ENCODE measurements at regions of chr1 and their contacts with region 1.

Region 1: DNA sequence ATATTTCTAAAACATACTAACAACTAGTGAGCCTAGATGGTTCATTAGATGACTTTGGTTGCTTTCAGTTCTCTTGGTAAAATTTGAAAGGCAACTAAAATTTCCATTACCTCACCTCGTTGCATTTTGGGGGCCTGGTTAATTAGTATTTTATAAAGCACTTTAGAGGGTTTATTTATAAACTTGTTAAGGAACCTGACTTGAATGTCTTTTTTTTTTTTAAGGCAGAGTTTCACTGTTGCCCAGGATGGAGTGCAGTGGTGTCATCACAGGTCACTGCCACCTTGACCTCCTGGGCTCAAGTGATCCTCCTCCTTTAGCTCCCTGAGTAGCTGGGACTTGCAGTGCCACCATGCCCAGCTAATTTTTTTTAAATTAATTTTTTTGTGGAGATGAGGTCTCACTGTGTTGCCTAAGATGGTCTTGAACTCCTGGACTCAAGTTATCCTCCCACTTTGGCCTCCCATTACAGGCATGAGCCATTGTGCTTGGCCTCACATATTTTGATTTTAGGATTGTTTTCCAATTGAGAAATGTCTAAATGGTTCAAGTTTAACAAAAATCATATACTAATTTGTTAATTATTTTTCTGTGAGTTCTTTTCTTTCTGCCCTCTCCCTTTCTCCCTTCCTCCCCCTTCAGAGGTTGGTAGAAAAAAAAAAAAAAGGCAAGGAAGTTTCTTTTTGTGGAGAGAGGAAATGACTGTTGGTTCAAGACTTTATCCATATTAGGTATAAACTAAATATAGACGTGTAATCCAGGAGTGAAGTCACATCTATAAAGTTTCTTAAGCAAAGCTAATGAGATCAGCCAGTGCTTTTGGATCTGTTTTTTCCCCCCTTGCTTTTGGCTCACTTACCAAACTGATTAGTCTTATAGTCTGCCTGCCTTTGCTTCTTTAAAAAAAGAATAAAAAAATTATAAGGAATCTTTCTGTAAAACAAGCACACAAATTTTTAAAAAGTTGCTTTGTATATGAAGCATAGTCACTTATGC is 24.7 kb downstream of the CLIC4 start:
- DNase-seq: no peak
- ATAC-seq: peak; percentile 78
- H3K4me3 ChIP-seq: no peak overlapping the region
- H3K27ac ChIP-seq: peak overlapping the region; percentile 54
- H3K4me1 ChIP-seq: peaks cover 7% of the 10 kb centered on the region; the same call in 1 of the 2 replicates
- H3K27me3 ChIP-seq: no peaks in the 10 kb centered on the region
- CTCF ChIP-seq: no peak
- EP300 ChIP-seq: peak; percentile 49 to 57; a peak in 3 of 4 replicates
- POLR2A ChIP-seq: no peak
- RAD21 ChIP-seq: no peak

Region 2: DNA sequence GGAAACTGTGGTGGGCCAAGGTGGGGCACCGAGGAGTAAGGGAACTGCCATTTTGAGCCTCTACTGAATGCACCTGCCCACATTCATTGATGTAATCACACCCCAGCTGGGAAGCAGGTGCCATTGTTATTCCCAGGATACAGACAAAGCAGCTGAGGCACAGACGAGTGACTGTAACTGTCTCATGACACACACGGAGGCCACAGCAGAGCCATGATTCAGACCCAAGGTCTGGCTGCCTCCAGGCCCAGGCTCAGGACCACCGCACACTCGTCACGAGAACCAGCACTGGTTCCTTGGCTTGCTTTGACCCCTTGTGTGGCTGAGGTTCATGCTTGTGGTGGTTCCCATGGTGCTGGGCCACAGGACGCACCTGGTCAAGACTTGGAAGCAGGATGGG is 70.3 kb before region 1 on chr1:
- CTCF ChIA-PET with region 1: no interaction called
- POLR2A ChIA-PET with region 1: interaction called, 10 read pairs
- RAD21 ChIA-PET with region 1: no interaction called
- SMC1A ChIA-PET with region 1: interaction called, 6 read pairs
- in situ Hi-C with region 1: no loop called
- intact Hi-C with region 1: no loop called
- DNase-seq: no peak
- ATAC-seq: no peak
- H3K4me3 ChIP-seq: no peak overlapping the region
- H3K27ac ChIP-seq: no peak overlapping the region
- H3K4me1 ChIP-seq: peaks cover 17% of the 10 kb centered on the region
- H3K27me3 ChIP-seq: no peaks in the 10 kb centered on the region
- CTCF ChIP-seq: no peak
- EP300 ChIP-seq: no peak
- POLR2A ChIP-seq: no peak
- RAD21 ChIP-seq: no peak

Region 3: DNA sequence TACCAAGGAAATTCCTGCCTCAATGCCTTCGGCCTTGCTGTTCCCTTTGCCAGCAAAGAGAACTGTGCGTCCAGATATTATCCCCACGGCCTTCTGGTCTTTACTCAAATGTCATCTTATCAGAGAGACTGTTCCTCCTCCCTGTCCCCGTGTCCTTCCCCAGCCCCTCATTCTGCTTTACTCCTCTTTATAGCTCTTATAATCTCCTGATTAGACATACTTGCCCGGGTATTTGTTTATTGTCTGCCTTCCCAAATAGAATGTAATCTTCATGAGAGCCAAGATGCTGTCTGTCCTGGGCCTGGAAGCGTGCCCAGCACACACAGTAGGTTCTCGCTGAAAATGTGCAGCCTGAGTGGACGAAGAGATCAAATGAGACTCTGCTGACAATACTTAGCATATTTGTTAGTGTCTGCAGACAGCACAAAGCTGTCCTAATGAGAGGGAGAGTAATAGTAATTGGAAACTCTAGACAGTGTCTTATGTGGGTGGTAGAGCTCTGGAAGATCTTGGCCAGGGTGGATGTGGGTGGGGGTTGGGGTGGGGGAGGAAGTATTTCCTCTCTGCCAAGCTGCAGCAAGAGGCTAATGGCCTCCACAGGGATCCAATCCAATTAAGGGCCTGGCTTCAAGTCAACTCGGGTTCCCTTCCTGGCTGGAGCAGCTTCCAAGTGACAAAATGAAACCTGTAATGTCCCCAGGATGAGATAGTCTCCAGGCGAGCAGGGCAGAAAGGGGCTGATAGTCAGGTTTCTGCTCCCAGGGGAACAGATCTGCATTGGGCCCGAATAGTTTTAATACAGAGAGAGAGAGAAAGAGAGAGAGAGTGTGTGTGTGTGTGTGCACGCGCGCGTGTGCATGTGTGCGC is 34.2 kb before region 1 on chr1:
- CTCF ChIA-PET with region 1: interaction called, 4 read pairs
- POLR2A ChIA-PET with region 1: interaction called, 5 read pairs
- RAD21 ChIA-PET with region 1: interaction called, 3 read pairs
- SMC1A ChIA-PET with region 1: interaction called, 12 read pairs
- in situ Hi-C with region 1: no loop called
- intact Hi-C with region 1: no loop called
- DNase-seq: no peak
- ATAC-seq: no peak
- H3K4me3 ChIP-seq: no peak overlapping the region
- H3K27ac ChIP-seq: peak overlapping the region; percentile 33; the same call in 1 of the 2 replicates
- H3K4me1 ChIP-seq: peaks cover 38% of the 10 kb centered on the region
- H3K27me3 ChIP-seq: no peaks in the 10 kb centered on the region
- CTCF ChIP-seq: no peak
- EP300 ChIP-seq: no peak
- POLR2A ChIP-seq: no peak
- RAD21 ChIP-seq: no peak

Region 4: DNA sequence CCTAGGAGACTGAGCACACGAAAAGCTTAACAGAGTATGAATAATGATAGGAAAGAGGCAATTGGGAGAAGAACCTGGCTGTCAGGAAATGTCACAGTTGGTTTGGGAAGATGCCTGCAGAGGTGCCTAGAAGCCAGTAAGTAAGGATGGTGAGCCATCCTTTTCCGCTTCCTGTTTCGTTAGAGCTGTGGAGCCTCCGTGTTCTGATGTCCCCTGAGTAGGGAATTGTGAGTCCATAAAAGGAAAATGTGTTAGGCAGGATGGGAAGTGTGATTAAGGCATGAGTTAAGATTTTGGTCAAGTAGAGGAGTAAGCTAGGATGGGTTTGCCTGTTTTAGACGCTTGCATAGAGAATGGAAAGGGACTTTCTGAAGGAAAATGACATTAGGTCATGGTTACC is 15.7 kb before region 1 on chr1:
- CTCF ChIA-PET with region 1: interaction called, 9 read pairs
- POLR2A ChIA-PET with region 1: interaction called, 14 read pairs
- RAD21 ChIA-PET with region 1: interaction called, 26 read pairs
- SMC1A ChIA-PET with region 1: interaction called, 174 read pairs
- in situ Hi-C with region 1: no loop called
- intact Hi-C with region 1: no loop called
- DNase-seq: no peak
- ATAC-seq: no peak
- H3K4me3 ChIP-seq: no peak overlapping the region
- H3K27ac ChIP-seq: no peak overlapping the region
- H3K4me1 ChIP-seq: peaks cover 7% of the 10 kb centered on the region; the same call in 1 of the 2 replicates
- H3K27me3 ChIP-seq: no peaks in the 10 kb centered on the region
- CTCF ChIP-seq: no peak
- EP300 ChIP-seq: no peak
- POLR2A ChIP-seq: no peak
- RAD21 ChIP-seq: no peak

Region 5: DNA sequence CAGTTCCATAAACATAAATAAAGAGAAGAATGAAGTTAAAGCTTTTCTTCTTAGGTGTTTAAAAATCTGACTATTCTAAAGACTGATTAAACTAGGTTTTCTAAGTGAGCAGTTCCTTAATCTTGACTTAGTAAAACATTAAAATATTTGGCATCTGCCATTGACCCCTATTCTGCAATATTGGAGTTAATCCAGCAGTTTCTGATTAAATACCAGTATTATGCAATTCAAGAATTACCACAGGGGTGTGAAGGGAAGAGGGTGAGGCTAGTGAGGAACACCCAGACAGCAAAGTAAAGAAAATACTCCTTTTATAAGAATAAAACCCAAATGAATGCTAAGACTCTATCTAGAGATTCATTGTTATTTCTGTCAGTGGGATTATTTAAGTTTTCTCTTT is 16.2 kb after region 1 on chr1:
- CTCF ChIA-PET with region 1: interaction called, 5 read pairs
- POLR2A ChIA-PET with region 1: interaction called, 10 read pairs
- RAD21 ChIA-PET with region 1: interaction called, 3 read pairs
- SMC1A ChIA-PET with region 1: interaction called, 5 read pairs
- in situ Hi-C with region 1: no loop called
- intact Hi-C with region 1: no loop called
- DNase-seq: no peak
- ATAC-seq: no peak
- H3K4me3 ChIP-seq: no peak overlapping the region
- H3K27ac ChIP-seq: no peak overlapping the region
- H3K4me1 ChIP-seq: no peaks in the 10 kb centered on the region
- H3K27me3 ChIP-seq: no peaks in the 10 kb centered on the region
- CTCF ChIP-seq: no peak
- EP300 ChIP-seq: no peak
- POLR2A ChIP-seq: no peak
- RAD21 ChIP-seq: no peak

Region 6: DNA sequence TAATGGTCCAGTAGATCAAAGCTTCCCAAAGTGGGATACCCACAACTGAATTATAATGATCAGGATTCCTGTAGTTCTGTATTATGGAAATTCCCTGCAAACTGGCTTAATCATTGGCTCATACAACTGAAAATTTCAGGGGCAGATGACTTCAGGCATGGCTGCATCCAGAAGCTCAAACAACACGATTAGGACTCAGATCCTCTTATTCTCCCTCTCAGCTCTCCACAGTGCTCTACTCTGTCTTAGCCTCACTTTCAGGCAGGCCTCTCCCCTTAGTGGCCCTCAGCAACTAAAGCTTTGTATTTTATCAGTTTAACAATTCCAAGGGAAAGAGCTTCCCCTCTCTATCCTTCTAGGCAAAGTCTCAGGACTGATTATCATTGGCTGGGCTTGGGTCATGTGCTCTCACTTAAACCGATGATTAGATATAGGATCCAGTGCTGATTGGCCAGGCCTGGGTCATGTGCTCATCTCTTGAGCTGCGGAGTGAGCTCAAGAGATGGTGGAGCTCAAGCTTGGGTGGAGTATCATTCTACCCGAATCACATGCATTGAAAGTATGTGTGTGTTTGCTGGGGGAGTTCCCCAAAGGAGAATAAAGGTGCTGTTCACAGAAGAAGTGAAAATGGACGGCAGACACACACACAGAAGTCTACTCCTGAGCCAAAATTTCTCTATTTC is 218.1 kb after region 1 on chr1:
- CTCF ChIA-PET with region 1: no interaction called
- POLR2A ChIA-PET with region 1: no interaction called
- RAD21 ChIA-PET with region 1: no interaction called
- SMC1A ChIA-PET with region 1: no interaction called
- in situ Hi-C with region 1: no loop called
- intact Hi-C with region 1: no loop called
- DNase-seq: peak; percentile 42
- ATAC-seq: peak; percentile 93
- H3K4me3 ChIP-seq: no peak overlapping the region
- H3K27ac ChIP-seq: no peak overlapping the region
- H3K4me1 ChIP-seq: peaks cover 12% of the 10 kb centered on the region
- H3K27me3 ChIP-seq: no peaks in the 10 kb centered on the region
- CTCF ChIP-seq: no peak
- EP300 ChIP-seq: peak in 1 of 2 experiments; percentile 10; a peak in 1 of 4 replicates
- POLR2A ChIP-seq: no peak
- RAD21 ChIP-seq: 0 out of 2 replicates have a peak, but pooled peaks have one; percentile 5

Measured in GM12878 (cell line).